ENCODE measurements at regions of chr17 and their contacts with region 1.

Region 1: DNA sequence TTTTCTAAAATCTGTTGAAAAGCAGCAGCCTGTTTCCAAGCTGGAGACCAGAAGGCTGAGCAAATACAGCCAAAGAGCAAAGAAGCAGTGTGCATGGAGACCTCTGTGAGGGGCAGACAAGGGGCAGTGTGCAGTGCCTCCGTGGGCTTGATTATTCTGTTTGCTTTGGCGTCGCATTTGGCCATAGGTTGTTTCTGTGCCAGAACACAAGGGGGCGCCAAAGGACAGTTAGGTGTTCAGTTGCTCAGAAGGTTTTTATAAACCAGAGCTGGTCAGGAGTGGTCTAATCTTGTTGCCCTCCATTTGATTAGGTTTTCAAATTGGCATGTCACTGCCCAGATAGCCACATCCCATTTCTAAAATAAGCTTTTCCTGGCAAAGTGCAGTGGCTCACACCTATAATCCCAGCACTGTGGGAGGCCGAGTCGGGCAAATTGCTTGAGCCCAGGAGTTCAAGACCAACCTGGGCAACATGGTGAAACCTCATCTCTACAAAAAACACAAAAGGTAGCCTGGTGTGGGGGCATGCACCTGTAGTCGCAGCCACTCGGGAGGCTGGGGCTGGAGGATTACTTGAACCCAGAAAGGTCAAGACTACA is 10.6 kb downstream of the MYH3 start:
- DNase-seq: peak; percentile 85
- H3K4me3 Mint-ChIP-seq: no peak overlapping the region
- H3K27ac Mint-ChIP-seq: no peak overlapping the region
- H3K4me1 Mint-ChIP-seq: no peaks in the 10 kb centered on the region
- H3K27me3 Mint-ChIP-seq: no peaks in the 10 kb centered on the region

Region 2: GRCh38 chr17:10631048-10631700 is 15.3 kb before region 1 on chr17:
- CTCF ChIA-PET with region 1: interaction called, 33 read pairs
- intact Hi-C with region 1: no loop called
- DNase-seq: peak; percentile 40
- H3K4me3 Mint-ChIP-seq: no peak overlapping the region
- H3K27ac Mint-ChIP-seq: no peak overlapping the region
- H3K4me1 Mint-ChIP-seq: no peaks in the 10 kb centered on the region
- H3K27me3 Mint-ChIP-seq: no peaks in the 10 kb centered on the region

Region 3: DNA sequence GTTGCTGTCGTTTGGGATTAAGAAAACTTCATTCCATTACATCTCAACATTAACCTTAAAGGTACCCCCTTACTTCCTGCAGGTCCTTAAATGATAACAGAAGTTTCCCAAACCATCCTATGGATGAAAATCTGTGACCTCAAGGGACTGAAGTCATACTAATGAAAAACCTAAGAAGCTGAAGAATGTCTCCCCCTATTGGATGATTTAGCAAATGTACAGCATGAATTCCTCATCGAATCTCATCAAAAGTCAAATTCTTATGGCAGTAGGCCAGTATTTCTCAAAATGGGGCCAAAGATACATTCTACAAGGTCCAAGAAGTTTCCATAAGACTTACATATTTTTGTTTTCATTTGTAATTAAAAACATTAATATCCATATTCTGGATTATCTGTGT is 37.4 kb after region 1 on chr17:
- CTCF ChIA-PET with region 1: interaction called, 17 read pairs
- intact Hi-C with region 1: loop called (anchors 2 kb)
- DNase-seq: no peak
- H3K4me3 Mint-ChIP-seq: no peak overlapping the region
- H3K27ac Mint-ChIP-seq: no peak overlapping the region
- H3K4me1 Mint-ChIP-seq: peaks cover 5% of the 10 kb centered on the region
- H3K27me3 Mint-ChIP-seq: no peaks in the 10 kb centered on the region

Measured in activated naive CD4-positive, alpha-beta T cell treated with anti-CD3 and anti-CD28 coated beads for 36 hours (primary cell).